AG04450 (cell line): ENCODE measurements at regions of chr5 and their contacts with region 1.

Region 1: GRCh38 chr5:43120720-43121564 is at the start of gene ZNF131:
- DNase-seq: peak; percentile 91
- H3K4me3 ChIP-seq: peak within 1 kb of the TSS; percentile 79
- H3K27ac ChIP-seq: peak within 1 kb of the TSS; percentile 91
- H3K27me3 ChIP-seq: no peaks in the 10 kb centered on the region
- CTCF ChIP-seq: no peak
- polyA plus RNA-seq, gene ZNF131: 30.4 and 42.5 TPM in 2 replicates

Region 2: GRCh38 chr5:42940853-42941252 is 180.1 kb before region 1 on chr5:
- CTCF ChIA-PET with region 1: no interaction called
- POLR2A ChIA-PET with region 1: no interaction called
- DNase-seq: no peak
- H3K4me3 ChIP-seq: no peak overlapping the region
- H3K27ac ChIP-seq: no peak overlapping the region
- H3K27me3 ChIP-seq: no peaks in the 10 kb centered on the region
- CTCF ChIP-seq: no peak

Region 3: DNA sequence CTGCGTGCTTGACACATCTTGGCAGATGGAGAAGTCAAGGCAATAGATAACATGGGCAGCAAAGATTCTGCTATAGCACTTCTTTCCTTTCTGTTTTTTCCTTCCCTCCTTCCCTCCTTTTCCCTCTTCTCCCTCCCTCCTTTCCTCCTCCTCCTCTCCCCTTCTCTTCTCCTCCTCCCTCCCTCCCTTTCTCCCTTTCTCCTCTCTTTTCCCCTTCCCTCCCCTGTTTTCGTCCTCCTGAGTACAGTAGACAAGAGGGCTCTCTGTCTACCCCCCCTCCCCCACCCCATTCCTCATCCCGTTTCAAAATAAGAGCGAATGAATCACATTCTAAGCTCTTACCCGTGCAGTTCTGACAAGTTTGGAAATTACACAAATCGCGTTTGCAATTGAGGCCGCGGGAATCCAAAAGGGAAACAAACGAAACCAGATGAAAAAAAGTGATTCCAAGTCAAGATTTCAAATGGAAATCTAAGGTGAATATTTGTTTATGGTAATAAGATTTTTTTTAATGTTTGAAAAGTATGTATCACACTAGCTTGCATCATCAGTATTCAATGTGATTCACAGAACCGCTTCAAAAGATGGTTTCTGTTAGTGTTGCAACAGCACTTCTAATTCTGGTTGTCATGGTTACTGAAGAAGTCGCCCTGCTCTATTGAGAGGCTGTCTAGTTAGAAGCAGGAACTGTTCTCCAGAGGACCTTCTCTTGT is 72.4 kb after region 1 on chr5:
- CTCF ChIA-PET with region 1: no interaction called
- POLR2A ChIA-PET with region 1: interaction called, 11 read pairs
- DNase-seq: peak; percentile 72
- H3K4me3 ChIP-seq: peak overlapping the region; percentile 67
- H3K27ac ChIP-seq: peak overlapping the region; percentile 54
- H3K27me3 ChIP-seq: no peaks in the 10 kb centered on the region
- CTCF ChIP-seq: no peak

Region 4: GRCh38 chr5:43313035-43313853 is 192.3 kb after region 1 on chr5 and contains the start of gene HMGCS1:
- CTCF ChIA-PET with region 1: interaction called, 3 read pairs
- POLR2A ChIA-PET with region 1: interaction called, 11 read pairs
- DNase-seq: peak; percentile 99
- H3K4me3 ChIP-seq: peak within 1 kb of the TSS; percentile 98
- H3K27ac ChIP-seq: peak within 1 kb of the TSS; percentile 91
- H3K27me3 ChIP-seq: peaks cover 3% of the 10 kb centered on the region
- CTCF ChIP-seq: peak; percentile 8; the same call in 1 of the 2 replicates
- polyA plus RNA-seq, gene HMGCS1: 26.5 and 31.1 TPM in 2 replicates